GM12878 (cell line): ENCODE measurements at regions of chr6 and their contacts with region 1.

Region 1: DNA sequence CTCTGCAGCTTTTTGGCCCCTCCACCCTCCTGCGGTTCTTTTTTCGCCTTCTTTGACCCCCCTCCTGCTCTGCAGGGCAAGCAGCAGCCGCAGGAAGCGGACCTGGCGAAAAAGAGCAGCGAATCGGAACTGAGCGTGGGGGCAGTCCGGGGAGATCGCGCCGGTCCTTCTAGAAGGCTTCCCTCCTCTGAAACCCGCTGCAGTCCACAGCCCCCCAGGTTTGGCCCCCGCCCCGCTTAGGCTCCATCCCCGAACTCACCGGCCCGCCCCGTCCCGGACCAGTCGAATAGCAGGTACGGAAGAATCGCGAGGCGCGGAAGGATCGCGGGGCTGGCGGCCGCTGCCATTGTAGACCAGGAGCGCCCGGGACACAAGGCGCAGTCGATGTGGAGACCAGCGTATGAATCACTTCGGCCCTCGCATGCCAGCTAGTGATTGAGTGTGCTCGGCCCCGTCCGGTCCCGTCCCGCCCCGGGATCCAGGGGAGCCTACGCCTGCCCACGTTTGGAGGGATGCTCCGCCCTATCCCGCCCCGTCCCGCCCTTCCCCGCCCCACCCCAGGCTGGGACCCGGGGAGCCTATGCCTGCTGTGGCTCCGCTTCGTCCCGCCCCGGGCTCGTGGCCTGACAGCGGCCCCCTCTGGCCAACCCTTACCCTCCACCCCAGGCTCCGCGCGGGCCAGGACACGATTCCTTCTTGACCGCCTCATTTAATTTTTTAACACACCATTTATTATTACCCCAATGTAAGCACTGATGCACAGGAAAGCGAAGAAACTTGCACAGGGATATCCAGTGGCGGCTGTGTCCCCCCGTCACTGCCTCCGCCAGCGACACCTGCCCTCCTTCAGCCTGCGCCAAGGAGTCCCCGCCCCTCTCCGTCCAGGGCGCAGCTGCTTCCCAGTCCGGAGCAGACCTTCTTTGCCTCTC is at the start of gene ULBP3:
- DNase-seq: no peak
- ATAC-seq: peak; percentile 93
- H3K4me3 ChIP-seq: peak within 1 kb of the TSS; percentile 57
- H3K27ac ChIP-seq: no peak within 1 kb of the TSS
- H3K4me1 ChIP-seq: no peaks in the 10 kb centered on the region
- H3K27me3 ChIP-seq: peaks cover 0 to 2% of the 10 kb centered on the region in 2 experiments; a peak in 1 of 4 replicates
- CTCF ChIP-seq: peak; percentile 13 to 52 (median 44); a peak in 3 of 6 replicates
- EP300 ChIP-seq: no peak
- POLR2A ChIP-seq: peak; percentile 38; the same call in 1 of the 2 replicates
- RAD21 ChIP-seq: no peak
- polyA plus RNA-seq, gene ULBP3: not detected

Region 2: DNA sequence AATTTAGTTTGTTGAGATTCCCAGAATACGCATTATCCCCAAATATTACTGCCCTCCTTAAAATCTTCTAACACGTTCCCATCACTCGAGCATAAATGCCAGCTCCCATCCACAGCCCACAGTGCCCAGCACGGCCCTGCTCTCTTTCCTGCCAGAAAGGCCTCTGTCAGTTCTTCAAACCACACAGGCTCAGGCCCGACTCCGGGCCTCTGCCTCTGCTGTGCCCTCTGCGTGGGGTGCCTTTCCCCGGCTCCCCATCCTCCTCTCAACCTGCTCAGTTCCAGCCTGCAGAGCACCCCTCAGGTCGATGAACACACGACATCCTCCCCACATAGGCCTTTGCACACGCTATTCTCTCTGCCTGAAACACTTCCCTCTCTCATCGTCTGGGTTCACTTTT is 12.8 kb before region 1 on chr6:
- CTCF ChIA-PET with region 1: interaction called, 10 read pairs
- POLR2A ChIA-PET with region 1: no interaction called
- RAD21 ChIA-PET with region 1: no interaction called
- SMC1A ChIA-PET with region 1: no interaction called
- in situ Hi-C with region 1: no loop called
- intact Hi-C with region 1: no loop called
- DNase-seq: no peak
- ATAC-seq: no peak
- H3K4me3 ChIP-seq: no peak overlapping the region
- H3K27ac ChIP-seq: no peak overlapping the region
- H3K4me1 ChIP-seq: no peaks in the 10 kb centered on the region
- H3K27me3 ChIP-seq: peaks cover 2 to 5% of the 10 kb centered on the region in 2 experiments; a peak in 2 of 4 replicates
- CTCF ChIP-seq: no peak
- EP300 ChIP-seq: no peak
- POLR2A ChIP-seq: no peak
- RAD21 ChIP-seq: no peak